GM12878 (cell line): ENCODE measurements at regions of chr12 and their contacts with region 1.

Region 1: GRCh38 chr12:42469355-42470175 is 120.0 kb downstream of the PRICKLE1 start:
- DNase-seq: peak; percentile 97
- ATAC-seq: peak; percentile 96
- H3K4me3 ChIP-seq: peak overlapping the region; percentile 52
- H3K27ac ChIP-seq: peak overlapping the region; percentile 72
- H3K4me1 ChIP-seq: peaks cover 20% of the 10 kb centered on the region
- H3K27me3 ChIP-seq: no peaks in the 10 kb centered on the region
- CTCF ChIP-seq: no peak
- EP300 ChIP-seq: peak; percentile 57 to 87; a peak in 3 of 4 replicates
- POLR2A ChIP-seq: no peak
- RAD21 ChIP-seq: no peak

Region 2: DNA sequence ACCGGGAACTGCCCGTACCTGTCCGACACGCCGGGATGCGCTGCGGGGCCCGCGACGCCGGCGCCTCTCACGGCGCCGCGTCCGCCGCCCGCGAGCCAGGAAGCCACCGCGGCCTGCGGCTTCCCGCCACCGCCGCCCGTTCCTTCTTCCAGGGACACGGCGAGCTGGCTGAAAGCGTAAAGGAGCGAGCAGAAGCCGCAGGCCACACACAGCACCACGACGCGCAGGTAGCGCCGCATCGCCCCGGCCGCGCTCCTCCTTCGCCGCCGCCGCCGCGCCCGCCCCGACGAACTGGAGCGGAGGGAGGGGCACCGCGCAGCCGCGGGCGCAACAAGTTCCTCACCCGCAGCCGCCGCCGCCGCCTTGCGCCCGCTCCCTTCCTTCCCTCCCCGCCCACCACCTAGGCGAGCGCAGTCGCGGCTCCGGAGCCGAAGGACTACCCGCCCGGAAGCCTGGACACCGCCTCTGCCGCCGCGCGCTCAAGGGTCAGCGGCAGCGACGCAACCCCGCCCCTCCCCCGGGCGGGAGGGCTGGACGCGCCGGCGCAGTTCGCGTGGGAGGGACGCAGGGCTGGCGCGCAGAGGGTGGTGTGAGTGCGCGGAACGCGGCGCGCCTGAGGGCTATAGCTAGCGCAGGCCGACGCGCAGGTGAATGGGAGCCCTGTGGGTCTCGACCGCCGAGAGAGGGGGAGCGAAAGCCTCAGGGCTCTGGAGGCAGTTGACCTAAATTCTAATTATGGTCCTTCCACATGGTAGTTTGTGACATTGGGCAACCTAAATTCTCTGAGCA is 325.0 kb before region 1 on chr12 and contains the start of gene GXYLT1:
- CTCF ChIA-PET with region 1: no interaction called
- POLR2A ChIA-PET with region 1: no interaction called
- RAD21 ChIA-PET with region 1: interaction called, 3 read pairs
- SMC1A ChIA-PET with region 1: no interaction called
- in situ Hi-C with region 1: no loop called
- intact Hi-C with region 1: loop called (anchors 10 kb)
- DNase-seq: peak; percentile 79
- ATAC-seq: peak; percentile 94
- H3K4me3 ChIP-seq: peak within 1 kb of the TSS; percentile 82
- H3K27ac ChIP-seq: peak within 1 kb of the TSS; percentile 61
- H3K4me1 ChIP-seq: peaks cover 5% of the 10 kb centered on the region; the same call in 1 of the 2 replicates
- H3K27me3 ChIP-seq: no peaks in the 10 kb centered on the region
- CTCF ChIP-seq: no peak
- EP300 ChIP-seq: no peak; a peak in 1 of 4 replicates
- POLR2A ChIP-seq: peak; percentile 86
- RAD21 ChIP-seq: no peak
- polyA plus RNA-seq, gene GXYLT1: 2.3 to 2.4 TPM

Region 3: GRCh38 chr12:42299392-42300308 is 169.9 kb before region 1 on chr12:
- CTCF ChIA-PET with region 1: no interaction called
- POLR2A ChIA-PET with region 1: no interaction called
- RAD21 ChIA-PET with region 1: interaction called, 9 read pairs
- SMC1A ChIA-PET with region 1: interaction called, 10 read pairs
- in situ Hi-C with region 1: no loop called
- intact Hi-C with region 1: no loop called
- DNase-seq: peak; percentile 97
- ATAC-seq: peak; percentile 88
- H3K4me3 ChIP-seq: peak overlapping the region; percentile 55; the same call in 1 of the 2 replicates
- H3K27ac ChIP-seq: peak overlapping the region; percentile 77
- H3K4me1 ChIP-seq: peaks cover 20% of the 10 kb centered on the region
- H3K27me3 ChIP-seq: no peaks in the 10 kb centered on the region
- CTCF ChIP-seq: no peak
- EP300 ChIP-seq: peak; percentile 96 to 97
- POLR2A ChIP-seq: no peak
- RAD21 ChIP-seq: peak; percentile 25; the same call in 1 of the 2 replicates

Region 4: DNA sequence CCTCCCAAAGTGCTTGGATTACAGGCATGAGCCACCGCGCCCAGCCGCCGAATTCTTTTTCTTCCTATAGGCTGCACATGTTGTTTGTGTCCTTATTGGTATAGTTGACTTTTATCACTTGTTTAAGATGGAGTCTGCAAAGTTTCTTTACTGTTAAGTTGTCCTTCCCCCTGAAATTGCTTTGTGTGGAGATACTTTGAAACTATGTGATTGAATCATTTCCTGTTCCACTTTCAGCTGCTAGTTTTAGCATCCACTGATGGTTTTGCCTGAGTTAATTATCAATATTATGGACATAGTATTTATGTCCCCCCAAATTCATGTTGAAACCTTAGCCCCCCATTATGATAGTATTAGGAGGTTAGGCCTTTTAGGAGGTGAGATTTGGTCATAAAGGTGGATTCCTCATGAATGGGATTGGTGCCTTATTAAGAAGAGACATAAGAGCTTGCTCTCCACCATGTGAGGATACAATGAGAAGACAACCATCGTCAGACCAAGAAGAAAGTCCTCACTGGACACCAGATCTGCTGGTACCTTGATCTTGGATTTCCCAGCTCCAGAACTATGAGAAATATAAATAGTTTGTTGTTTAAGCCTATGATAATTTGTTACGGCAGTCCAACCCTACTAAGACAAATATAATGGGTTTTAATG is 108.7 kb before region 1 on chr12:
- CTCF ChIA-PET with region 1: no interaction called
- POLR2A ChIA-PET with region 1: no interaction called
- RAD21 ChIA-PET with region 1: no interaction called
- SMC1A ChIA-PET with region 1: no interaction called
- in situ Hi-C with region 1: no loop called
- intact Hi-C with region 1: no loop called
- DNase-seq: no peak
- ATAC-seq: peak; percentile 89
- H3K4me3 ChIP-seq: no peak overlapping the region
- H3K27ac ChIP-seq: peak overlapping the region; percentile 50
- H3K4me1 ChIP-seq: peaks cover 19% of the 10 kb centered on the region
- H3K27me3 ChIP-seq: no peaks in the 10 kb centered on the region
- CTCF ChIP-seq: no peak
- EP300 ChIP-seq: 0 out of 4 replicates have a peak, but pooled peaks of 1 of the 2 experiments have one; percentile 23
- POLR2A ChIP-seq: no peak
- RAD21 ChIP-seq: no peak

Region 5: GRCh38 chr12:42396473-42397259 is 72.9 kb before region 1 on chr12:
- CTCF ChIA-PET with region 1: no interaction called
- POLR2A ChIA-PET with region 1: interaction called, 13 read pairs
- RAD21 ChIA-PET with region 1: no interaction called
- SMC1A ChIA-PET with region 1: interaction called, 6 read pairs
- in situ Hi-C with region 1: no loop called
- intact Hi-C with region 1: no loop called
- DNase-seq: no peak
- ATAC-seq: peak; percentile 38; the same call in 1 of the 3 replicates
- H3K4me3 ChIP-seq: no peak overlapping the region
- H3K27ac ChIP-seq: no peak overlapping the region
- H3K4me1 ChIP-seq: no peaks in the 10 kb centered on the region
- H3K27me3 ChIP-seq: no peaks in the 10 kb centered on the region
- CTCF ChIP-seq: no peak
- EP300 ChIP-seq: no peak
- POLR2A ChIP-seq: no peak
- RAD21 ChIP-seq: no peak

Region 6: GRCh38 chr12:42482445-42483237 is 13.1 kb after region 1 on chr12:
- CTCF ChIA-PET with region 1: interaction called, 87 read pairs
- POLR2A ChIA-PET with region 1: interaction called, 6 read pairs
- RAD21 ChIA-PET with region 1: interaction called, 25 read pairs
- SMC1A ChIA-PET with region 1: interaction called, 40 read pairs
- in situ Hi-C with region 1: no loop called
- intact Hi-C with region 1: no loop called
- DNase-seq: no peak
- ATAC-seq: peak; percentile 95
- H3K4me3 ChIP-seq: peak overlapping the region; percentile 73
- H3K27ac ChIP-seq: no peak overlapping the region
- H3K4me1 ChIP-seq: peaks cover 9% of the 10 kb centered on the region
- H3K27me3 ChIP-seq: peaks cover 0 to 6% of the 10 kb centered on the region in 2 experiments; a peak in 1 of 4 replicates
- CTCF ChIP-seq: peak; percentile 79 to 96 (median 82)
- EP300 ChIP-seq: no peak
- POLR2A ChIP-seq: no peak
- RAD21 ChIP-seq: peak; percentile 85

Region 7: DNA sequence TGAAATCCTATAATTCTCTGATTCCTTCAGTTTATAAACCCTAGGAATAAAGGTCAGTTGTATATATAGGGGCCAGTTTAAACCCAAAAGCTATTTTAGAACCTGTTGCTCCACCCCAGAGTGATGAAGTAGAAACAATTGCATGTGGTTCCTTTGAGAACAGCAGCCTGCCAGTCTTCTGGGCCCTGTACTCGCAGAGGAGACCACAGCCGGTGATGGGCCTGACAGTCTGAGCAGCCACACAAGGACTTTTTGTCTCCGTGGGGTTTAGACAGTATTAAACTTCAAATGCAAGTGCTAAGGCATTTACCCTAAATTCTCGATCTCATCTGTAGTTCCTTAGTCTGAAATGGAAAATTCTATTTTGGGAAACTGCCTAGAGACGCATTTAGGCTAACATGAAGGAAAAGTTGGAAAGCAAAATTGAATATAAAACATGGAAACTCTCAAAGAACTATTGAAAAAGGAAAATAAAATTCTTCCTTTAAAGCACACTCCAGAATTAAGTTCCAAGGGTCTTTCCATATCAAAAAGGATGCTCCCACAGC is 39.4 kb after region 1 on chr12:
- CTCF ChIA-PET with region 1: no interaction called
- POLR2A ChIA-PET with region 1: no interaction called
- RAD21 ChIA-PET with region 1: no interaction called
- SMC1A ChIA-PET with region 1: no interaction called
- in situ Hi-C with region 1: no loop called
- intact Hi-C with region 1: no loop called
- DNase-seq: no peak
- ATAC-seq: no peak
- H3K4me3 ChIP-seq: no peak overlapping the region
- H3K27ac ChIP-seq: no peak overlapping the region
- H3K4me1 ChIP-seq: no peaks in the 10 kb centered on the region
- H3K27me3 ChIP-seq: no peaks in the 10 kb centered on the region
- CTCF ChIP-seq: no peak
- EP300 ChIP-seq: no peak
- POLR2A ChIP-seq: no peak
- RAD21 ChIP-seq: no peak

Region 8: DNA sequence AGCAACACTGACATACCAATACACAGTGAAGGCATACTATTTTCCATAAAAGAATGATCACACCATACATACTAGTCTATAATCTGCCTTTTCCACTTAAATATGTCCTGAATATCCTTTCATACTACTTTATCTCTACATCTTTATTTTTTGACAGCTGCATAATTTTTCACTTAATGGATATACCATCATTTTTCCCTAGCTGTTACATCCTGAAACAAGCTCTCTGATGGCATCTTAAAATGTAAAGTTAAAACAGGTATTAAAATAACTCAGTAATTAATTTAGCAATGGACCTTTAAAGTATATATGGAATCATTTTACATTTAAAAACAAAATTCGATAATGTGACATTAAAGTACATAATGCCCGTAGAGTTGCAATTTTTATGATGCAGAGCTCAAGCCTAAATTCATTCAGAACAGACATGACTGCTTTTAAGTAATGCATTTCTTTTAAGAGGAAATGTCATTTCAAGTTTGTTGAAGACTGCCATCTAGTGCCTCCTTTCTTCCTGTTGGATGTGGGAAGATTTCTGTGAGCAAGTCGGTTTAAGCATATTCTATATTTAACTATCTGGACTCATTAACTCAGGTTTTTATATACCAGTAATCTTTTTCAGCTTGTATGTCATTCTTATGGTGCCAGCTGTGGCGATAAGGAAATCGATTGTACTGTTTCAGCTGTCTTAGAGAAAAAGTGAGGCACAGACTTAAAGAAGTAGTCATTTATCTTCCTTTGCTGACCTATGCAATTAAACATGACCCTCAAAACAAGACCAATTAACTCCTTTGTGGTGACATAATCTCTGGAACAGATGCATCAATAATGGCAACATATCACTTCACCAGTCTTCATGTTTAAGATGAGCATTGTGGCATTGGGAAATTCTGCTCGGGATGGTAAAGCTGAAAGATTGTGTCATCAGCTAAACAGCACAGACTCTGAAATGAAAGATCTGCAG is 99.7 kb after region 1 on chr12:
- CTCF ChIA-PET with region 1: interaction called, 14 read pairs
- POLR2A ChIA-PET with region 1: no interaction called
- RAD21 ChIA-PET with region 1: interaction called, 3 read pairs
- SMC1A ChIA-PET with region 1: interaction called, 9 read pairs
- in situ Hi-C with region 1: no loop called
- intact Hi-C with region 1: no loop called
- DNase-seq: peak; percentile 38
- ATAC-seq: peak; percentile 85
- H3K4me3 ChIP-seq: no peak overlapping the region
- H3K27ac ChIP-seq: no peak overlapping the region
- H3K4me1 ChIP-seq: no peaks in the 10 kb centered on the region; the same call in 1 of the 2 replicates
- H3K27me3 ChIP-seq: no peaks in the 10 kb centered on the region
- CTCF ChIP-seq: peak; percentile 54 to 66 (median 54); a peak in 5 of 6 replicates
- EP300 ChIP-seq: no peak
- POLR2A ChIP-seq: no peak
- RAD21 ChIP-seq: peak; percentile 80

Region 9: GRCh38 chr12:42641221-42641885 is 171.8 kb after region 1 on chr12:
- CTCF ChIA-PET with region 1: no interaction called
- POLR2A ChIA-PET with region 1: no interaction called
- RAD21 ChIA-PET with region 1: no interaction called
- SMC1A ChIA-PET with region 1: no interaction called
- in situ Hi-C with region 1: no loop called
- intact Hi-C with region 1: no loop called
- DNase-seq: no peak
- ATAC-seq: no peak
- H3K4me3 ChIP-seq: no peak overlapping the region
- H3K27ac ChIP-seq: no peak overlapping the region
- H3K4me1 ChIP-seq: no peaks in the 10 kb centered on the region
- H3K27me3 ChIP-seq: no peaks in the 10 kb centered on the region
- CTCF ChIP-seq: no peak
- EP300 ChIP-seq: no peak
- POLR2A ChIP-seq: no peak
- RAD21 ChIP-seq: no peak

Region 10: GRCh38 chr12:43758728-43759563 is 1289.4 kb after region 1 on chr12 and contains the starts of genes IRAK4 and PUS7L:
- CTCF ChIA-PET with region 1: no interaction called
- POLR2A ChIA-PET with region 1: no interaction called
- RAD21 ChIA-PET with region 1: no interaction called
- SMC1A ChIA-PET with region 1: no interaction called
- in situ Hi-C with region 1: no loop called
- intact Hi-C with region 1: loop called (anchors 5 kb)
- DNase-seq: peak; percentile 87
- ATAC-seq: peak; percentile 92
- H3K4me3 ChIP-seq: peak within 1 kb of the TSS; percentile 84
- H3K27ac ChIP-seq: peak within 1 kb of the TSS; percentile 96
- H3K4me1 ChIP-seq: 0 out of 2 replicates have a peak, but pooled peaks cover 4% of the 10 kb centered on the region
- H3K27me3 ChIP-seq: no peaks in the 10 kb centered on the region
- CTCF ChIP-seq: peak; percentile 39 to 77 (median 56); a peak in 5 of 6 replicates
- EP300 ChIP-seq: no peak
- POLR2A ChIP-seq: peak; percentile 93
- RAD21 ChIP-seq: peak; percentile 43; the same call in 1 of the 2 replicates
- polyA plus RNA-seq, gene IRAK4: 7.9 to 13.8 TPM
- polyA plus RNA-seq, gene PUS7L: 9.2 to 42.1 TPM